Left colon (tissue), 2 donors: ENCODE measurements at regions of chr11 and their contacts with region 1.

Region 1: GRCh38 chr11:118238929-118239328 is 13.2 kb downstream of the MPZL3 start:
- DNase-seq: no peak
- ATAC-seq: no peak

Region 2: GRCh38 chr11:118214210-118214914 is 24.6 kb before region 1 on chr11:
- intact Hi-C with region 1: loop called in 1 of 2 experiments (anchors 2 kb)
- DNase-seq: peak; percentile 48 to 54
- ATAC-seq: peak; percentile 54